ENCODE measurements at regions of chr9 and their contacts with region 1.

Region 1: GRCh38 chr9:81535542-81536241 is 153.7 kb downstream of the TLE1 start:
- DNase-seq: no peak
- ATAC-seq: no peak
- H3K4me3 ChIP-seq: no peak overlapping the region
- H3K27ac ChIP-seq: no peak overlapping the region
- H3K4me1 ChIP-seq: peaks cover 0 to under 1% (median 0%) of the 10 kb centered on the region in 9 donors
- H3K27me3 ChIP-seq: no peaks in the 10 kb centered on the region
- CTCF ChIP-seq: no peak

Region 2: DNA sequence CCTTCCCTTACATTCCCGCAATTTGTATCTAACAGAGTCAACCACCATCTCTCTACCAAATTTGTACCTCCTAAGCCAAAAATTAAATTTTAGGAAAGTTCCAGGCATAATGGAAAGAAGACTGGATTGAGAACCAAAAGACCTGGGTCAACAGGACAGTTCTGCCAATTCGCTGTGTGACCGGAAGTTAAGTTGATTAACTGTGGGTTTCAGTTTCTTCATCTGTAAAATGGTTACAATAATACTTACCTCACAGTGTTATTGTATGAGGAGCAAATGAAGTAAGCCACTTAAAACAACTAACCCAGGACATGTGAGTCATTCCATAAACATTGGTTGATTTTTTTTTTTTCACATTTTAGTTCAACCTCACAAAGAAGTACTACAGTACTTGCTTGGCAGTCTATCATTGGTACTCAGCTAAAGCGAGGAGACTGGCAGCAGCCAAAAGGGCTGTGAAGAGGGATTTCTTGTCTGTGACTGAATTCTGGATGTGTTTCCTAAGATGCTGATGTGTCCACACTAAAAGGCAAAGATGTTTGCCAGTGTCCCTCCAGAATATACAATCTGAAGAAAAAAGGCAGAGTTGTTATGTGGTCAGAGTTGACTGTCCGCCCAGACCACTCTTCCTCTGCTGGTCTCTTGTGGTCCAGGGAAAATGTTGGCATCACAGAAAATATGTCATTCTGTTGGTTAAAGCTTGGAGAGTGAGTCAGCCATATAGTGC is 44.9 kb before region 1 on chr9:
- intact Hi-C with region 1: no loop called
- DNase-seq: no peak
- ATAC-seq: no peak
- H3K4me3 ChIP-seq: no peak overlapping the region
- H3K27ac ChIP-seq: no peak overlapping the region
- H3K4me1 ChIP-seq: peaks cover 0 to 4% (median 0%) of the 10 kb centered on the region in 9 donors
- H3K27me3 ChIP-seq: no peaks in the 10 kb centered on the region
- CTCF ChIP-seq: no peak

Region 3: DNA sequence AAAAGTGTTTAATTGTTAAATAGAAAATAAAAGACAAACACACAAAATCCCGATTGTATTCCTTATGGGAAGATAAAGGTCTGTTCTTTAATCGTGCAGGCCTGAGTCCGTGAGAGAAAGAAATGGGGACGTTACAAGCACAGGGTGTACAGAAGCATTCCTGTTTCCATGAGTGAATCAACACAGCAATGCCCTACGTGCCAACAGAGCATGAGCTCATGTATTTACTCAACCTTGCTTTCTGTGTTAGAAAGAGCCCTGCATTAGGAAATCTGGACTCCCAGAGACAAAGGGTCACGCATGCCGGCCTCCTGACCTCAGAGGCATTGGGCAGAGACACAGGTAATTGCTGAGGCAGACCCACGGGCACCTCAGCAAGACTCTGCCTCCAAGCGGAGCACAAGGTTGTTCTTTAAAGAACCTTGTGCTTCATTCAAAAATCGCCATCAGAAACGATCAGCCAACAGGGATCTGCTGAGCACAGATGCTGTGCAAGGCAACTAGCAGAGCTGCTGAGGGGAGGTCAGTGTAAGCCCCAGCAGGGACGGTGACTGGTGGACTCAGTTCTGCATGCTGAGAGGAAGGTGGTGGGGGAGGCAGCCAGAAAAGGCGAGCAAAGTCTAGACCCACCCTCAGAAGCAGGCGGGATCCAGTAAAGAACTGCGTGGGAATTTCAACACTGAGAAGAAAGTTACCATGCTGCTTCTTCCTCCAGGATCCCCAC is 52.6 kb after region 1 on chr9:
- intact Hi-C with region 1: loop called in 1 of 10 experiments (anchors 5 kb)
- DNase-seq: no peak
- ATAC-seq: peak in 7 of 8 donors; percentile 29 to 88 (median 56)
- H3K4me3 ChIP-seq: no peak overlapping the region
- H3K27ac ChIP-seq: no peak overlapping the region
- H3K4me1 ChIP-seq: peaks cover 0 to 26% (median 18%) of the 10 kb centered on the region in 9 donors
- H3K27me3 ChIP-seq: no peaks in the 10 kb centered on the region
- CTCF ChIP-seq: no peak

Measured in heart right ventricle (tissue), 16 donors.